SK-N-SH (cell line): ENCODE measurements at regions of chr4 and their contacts with region 1.

Region 1: GRCh38 chr4:56435306-56435926 is at the start of gene PPAT:
- DNase-seq: peak; percentile 98
- H3K4me3 ChIP-seq: peak within 1 kb of the TSS; percentile 74 to 87
- H3K27ac ChIP-seq: peak within 1 kb of the TSS; percentile 95 to 96
- H3K4me1 ChIP-seq: peaks cover 2 to 6% of the 10 kb centered on the region in 2 experiments; a peak in 3 of 4 replicates
- H3K27me3 ChIP-seq: no peaks in the 10 kb centered on the region
- CTCF ChIP-seq: no peak
- EP300 ChIP-seq: 0 out of 4 replicates have a peak, but pooled peaks of 1 of the 2 experiments have one; percentile 39
- RAD21 ChIP-seq: 0 out of 2 replicates have a peak, but pooled peaks have one; percentile 8
- polyA plus RNA-seq, gene PPAT: 7.4 and 9.5 TPM in 2 replicates

Region 2: GRCh38 chr4:55849724-55850123 is 585.7 kb before region 1 on chr4:
- CTCF ChIA-PET with region 1: no interaction called
- POLR2A ChIA-PET with region 1: no interaction called
- DNase-seq: no peak
- H3K4me3 ChIP-seq: no peak overlapping the region
- H3K27ac ChIP-seq: no peak overlapping the region
- H3K4me1 ChIP-seq: peaks cover 0 to 5% of the 10 kb centered on the region in 2 experiments; a peak in 2 of 4 replicates
- H3K27me3 ChIP-seq: no peaks in the 10 kb centered on the region
- CTCF ChIP-seq: no peak
- EP300 ChIP-seq: no peak
- RAD21 ChIP-seq: no peak

Region 3: GRCh38 chr4:56387023-56388001 is 48.1 kb before region 1 on chr4 and contains the start of gene AASDH:
- CTCF ChIA-PET with region 1: interaction called, 5 read pairs
- POLR2A ChIA-PET with region 1: interaction called, 29 read pairs
- DNase-seq: peak; percentile 86
- H3K4me3 ChIP-seq: peak within 1 kb of the TSS; percentile 90
- H3K27ac ChIP-seq: peak within 1 kb of the TSS; percentile 98
- H3K4me1 ChIP-seq: peaks cover 0 to 12% of the 10 kb centered on the region in 2 experiments; a peak in 3 of 4 replicates
- H3K27me3 ChIP-seq: no peaks in the 10 kb centered on the region
- CTCF ChIP-seq: no peak
- EP300 ChIP-seq: peak in 1 of 2 experiments; percentile 17; a peak in 1 of 4 replicates
- RAD21 ChIP-seq: no peak; the same call in 1 of the 2 replicates
- polyA plus RNA-seq, gene AASDH: 4.4 and 5.6 TPM in 2 replicates

Region 4: GRCh38 chr4:56410235-56411062 is 25.0 kb before region 1 on chr4:
- CTCF ChIA-PET with region 1: interaction called, 4 read pairs
- POLR2A ChIA-PET with region 1: interaction called, 15 read pairs
- DNase-seq: peak; percentile 69
- H3K4me3 ChIP-seq: peak overlapping the region; percentile 40 to 55
- H3K27ac ChIP-seq: peak overlapping the region; percentile 92 to 95
- H3K4me1 ChIP-seq: peaks cover 5 to 22% of the 10 kb centered on the region in 2 experiments; a peak in 3 of 4 replicates
- H3K27me3 ChIP-seq: no peaks in the 10 kb centered on the region
- CTCF ChIP-seq: no peak
- EP300 ChIP-seq: no peak; a peak in 2 of 4 replicates
- RAD21 ChIP-seq: no peak

Region 5: DNA sequence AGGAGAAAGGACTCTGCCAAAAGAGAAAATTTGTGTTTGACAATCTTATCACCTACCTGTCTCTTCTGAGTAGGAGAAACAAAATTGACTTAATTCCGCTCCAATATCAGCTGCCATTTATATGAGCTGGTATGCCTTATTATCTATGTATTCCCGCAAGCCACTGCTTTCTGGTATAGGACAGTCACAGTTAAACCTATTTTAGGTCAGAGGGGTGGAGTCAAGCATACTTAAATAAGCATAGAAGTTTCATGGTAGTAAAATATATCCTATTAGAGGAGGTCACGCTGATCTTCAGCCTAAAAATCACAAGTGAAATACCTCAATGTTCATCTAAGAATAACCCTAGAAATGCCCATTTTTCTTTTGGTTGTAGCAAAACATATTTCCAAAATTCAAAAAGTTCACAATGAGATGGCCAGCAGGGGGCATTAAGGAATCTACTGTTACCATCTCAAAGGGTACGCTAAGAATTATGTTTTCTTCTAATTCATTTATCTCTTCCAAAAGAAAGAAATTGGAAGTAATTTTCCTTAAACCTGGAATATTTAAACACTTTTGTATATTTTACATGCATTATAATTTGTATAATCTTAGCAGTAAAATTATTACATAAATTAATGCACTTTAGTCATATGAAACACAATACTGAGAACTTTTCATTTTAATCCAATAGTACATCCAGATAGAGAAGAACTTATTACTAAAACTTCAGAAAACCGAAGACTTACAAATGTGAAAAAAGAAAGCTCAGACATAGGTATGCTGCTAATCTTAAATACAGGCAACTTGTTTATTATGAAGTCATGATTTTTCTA is 10.5 kb before region 1 on chr4:
- CTCF ChIA-PET with region 1: interaction called, 21 read pairs
- POLR2A ChIA-PET with region 1: interaction called, 3 read pairs
- DNase-seq: peak; percentile 39
- H3K4me3 ChIP-seq: no peak overlapping the region; a peak in 1 of 4 replicates
- H3K27ac ChIP-seq: no peak overlapping the region; a peak in 1 of 4 replicates
- H3K4me1 ChIP-seq: no peaks in the 10 kb centered on the region; a peak in 1 of 4 replicates
- H3K27me3 ChIP-seq: no peaks in the 10 kb centered on the region
- CTCF ChIP-seq: peak; percentile 82
- EP300 ChIP-seq: no peak
- RAD21 ChIP-seq: peak; percentile 64

Region 6: DNA sequence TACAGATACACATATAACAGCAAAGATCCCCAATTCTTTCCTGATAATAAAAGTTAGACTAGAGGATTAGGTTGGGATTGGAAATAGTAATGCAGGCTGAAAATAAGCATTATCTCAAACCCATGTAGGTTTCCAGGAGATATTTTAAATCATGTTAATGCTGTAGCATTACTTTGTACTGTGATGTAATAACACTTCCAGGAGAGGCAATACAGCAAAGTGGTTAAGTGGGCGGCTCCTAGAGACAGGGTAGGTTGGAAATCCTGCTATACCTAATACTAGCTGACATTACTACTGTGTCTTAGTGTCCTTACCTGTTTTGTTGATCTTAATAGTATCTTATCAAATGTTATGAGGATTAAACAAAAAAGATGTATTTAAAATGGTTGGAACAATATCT is 10.3 kb after region 1 on chr4:
- CTCF ChIA-PET with region 1: no interaction called
- POLR2A ChIA-PET with region 1: interaction called, 11 read pairs
- DNase-seq: no peak
- H3K4me3 ChIP-seq: no peak overlapping the region
- H3K27ac ChIP-seq: no peak overlapping the region
- H3K4me1 ChIP-seq: peaks cover 0 to 8% of the 10 kb centered on the region in 2 experiments; a peak in 2 of 4 replicates
- H3K27me3 ChIP-seq: no peaks in the 10 kb centered on the region
- CTCF ChIP-seq: no peak
- EP300 ChIP-seq: no peak
- RAD21 ChIP-seq: no peak